Activated naive CD4-positive, alpha-beta T cell treated with anti-CD3 and anti-CD28 coated beads for 36 hours (primary cell): ENCODE measurements at regions of chr4 and their contacts with region 1.

Region 1: DNA sequence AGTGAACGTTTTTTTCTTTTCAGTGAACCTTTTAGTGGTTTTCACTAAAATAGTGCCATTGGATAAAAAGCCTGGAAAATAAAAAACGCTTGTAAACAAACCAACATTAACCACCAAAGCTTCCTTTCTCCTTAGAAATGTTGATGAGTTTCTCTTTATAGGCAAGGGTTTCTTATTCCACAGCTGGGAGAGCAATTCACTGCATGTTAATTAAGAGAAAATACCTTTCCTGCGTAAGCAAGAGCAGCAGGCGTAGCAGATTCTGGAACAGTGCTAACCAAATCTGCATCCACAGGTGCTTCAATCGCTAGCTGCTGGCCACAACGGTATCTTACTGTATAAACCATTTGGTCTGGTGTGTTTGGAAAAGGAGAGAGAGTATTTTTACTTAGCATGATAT is 13.3 kb upstream of the AASDH start:
- DNase-seq: no peak
- H3K4me3 Mint-ChIP-seq: no peak overlapping the region
- H3K27ac Mint-ChIP-seq: no peak overlapping the region
- H3K4me1 Mint-ChIP-seq: no peaks in the 10 kb centered on the region
- H3K27me3 Mint-ChIP-seq: no peaks in the 10 kb centered on the region

Region 2: GRCh38 chr4:56411726-56412125 is 11.2 kb after region 1 on chr4:
- CTCF ChIA-PET with region 1: interaction called, 6 read pairs
- intact Hi-C with region 1: loop called (anchors 2 kb)
- DNase-seq: no peak
- H3K4me3 Mint-ChIP-seq: no peak overlapping the region
- H3K27ac Mint-ChIP-seq: no peak overlapping the region
- H3K4me1 Mint-ChIP-seq: peaks cover 19% of the 10 kb centered on the region
- H3K27me3 Mint-ChIP-seq: no peaks in the 10 kb centered on the region

Region 3: DNA sequence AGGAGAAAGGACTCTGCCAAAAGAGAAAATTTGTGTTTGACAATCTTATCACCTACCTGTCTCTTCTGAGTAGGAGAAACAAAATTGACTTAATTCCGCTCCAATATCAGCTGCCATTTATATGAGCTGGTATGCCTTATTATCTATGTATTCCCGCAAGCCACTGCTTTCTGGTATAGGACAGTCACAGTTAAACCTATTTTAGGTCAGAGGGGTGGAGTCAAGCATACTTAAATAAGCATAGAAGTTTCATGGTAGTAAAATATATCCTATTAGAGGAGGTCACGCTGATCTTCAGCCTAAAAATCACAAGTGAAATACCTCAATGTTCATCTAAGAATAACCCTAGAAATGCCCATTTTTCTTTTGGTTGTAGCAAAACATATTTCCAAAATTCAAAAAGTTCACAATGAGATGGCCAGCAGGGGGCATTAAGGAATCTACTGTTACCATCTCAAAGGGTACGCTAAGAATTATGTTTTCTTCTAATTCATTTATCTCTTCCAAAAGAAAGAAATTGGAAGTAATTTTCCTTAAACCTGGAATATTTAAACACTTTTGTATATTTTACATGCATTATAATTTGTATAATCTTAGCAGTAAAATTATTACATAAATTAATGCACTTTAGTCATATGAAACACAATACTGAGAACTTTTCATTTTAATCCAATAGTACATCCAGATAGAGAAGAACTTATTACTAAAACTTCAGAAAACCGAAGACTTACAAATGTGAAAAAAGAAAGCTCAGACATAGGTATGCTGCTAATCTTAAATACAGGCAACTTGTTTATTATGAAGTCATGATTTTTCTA is 24.3 kb after region 1 on chr4:
- CTCF ChIA-PET with region 1: interaction called, 12 read pairs
- intact Hi-C with region 1: no loop called
- DNase-seq: peak; percentile 51
- H3K4me3 Mint-ChIP-seq: no peak overlapping the region
- H3K27ac Mint-ChIP-seq: no peak overlapping the region
- H3K4me1 Mint-ChIP-seq: peaks cover 23% of the 10 kb centered on the region
- H3K27me3 Mint-ChIP-seq: no peaks in the 10 kb centered on the region